ENCODE measurements at regions of chr1 and their contacts with region 1.

Region 1: DNA sequence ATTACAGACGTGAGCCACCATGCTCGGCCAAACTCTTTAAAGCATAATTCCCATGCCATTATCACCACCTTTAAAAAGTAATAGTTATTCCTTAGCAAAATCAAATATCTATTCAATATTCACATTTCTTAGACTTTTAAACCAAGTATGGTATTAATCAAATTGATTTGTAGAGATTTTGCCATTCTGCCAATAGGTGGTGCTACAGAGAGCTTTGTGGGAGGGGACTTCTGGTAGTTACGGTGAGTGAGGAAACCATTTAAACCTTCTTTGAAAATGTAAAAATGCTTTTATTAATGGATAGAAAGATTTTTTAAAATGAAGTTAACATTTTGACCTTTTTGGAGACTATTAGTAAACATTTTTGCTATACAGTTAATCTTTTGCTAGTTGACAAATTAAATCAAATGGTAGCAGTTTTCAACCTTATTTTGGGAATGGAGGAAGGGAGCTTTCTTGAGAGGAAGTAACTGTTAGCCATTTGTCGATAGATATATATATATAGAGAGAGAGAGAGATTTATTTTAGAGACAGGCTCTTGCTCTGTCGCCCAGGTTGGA is 19.3 kb downstream of the IARS2 start:
- DNase-seq: peak; percentile 40
- H3K4me3 ChIP-seq: no peak overlapping the region
- H3K27ac ChIP-seq: no peak overlapping the region
- H3K4me1 ChIP-seq: no peaks in the 10 kb centered on the region
- H3K27me3 ChIP-seq: no peaks in the 10 kb centered on the region
- CTCF ChIP-seq: peak; percentile 50 to 56
- POLR2A ChIP-seq: no peak

Region 2: DNA sequence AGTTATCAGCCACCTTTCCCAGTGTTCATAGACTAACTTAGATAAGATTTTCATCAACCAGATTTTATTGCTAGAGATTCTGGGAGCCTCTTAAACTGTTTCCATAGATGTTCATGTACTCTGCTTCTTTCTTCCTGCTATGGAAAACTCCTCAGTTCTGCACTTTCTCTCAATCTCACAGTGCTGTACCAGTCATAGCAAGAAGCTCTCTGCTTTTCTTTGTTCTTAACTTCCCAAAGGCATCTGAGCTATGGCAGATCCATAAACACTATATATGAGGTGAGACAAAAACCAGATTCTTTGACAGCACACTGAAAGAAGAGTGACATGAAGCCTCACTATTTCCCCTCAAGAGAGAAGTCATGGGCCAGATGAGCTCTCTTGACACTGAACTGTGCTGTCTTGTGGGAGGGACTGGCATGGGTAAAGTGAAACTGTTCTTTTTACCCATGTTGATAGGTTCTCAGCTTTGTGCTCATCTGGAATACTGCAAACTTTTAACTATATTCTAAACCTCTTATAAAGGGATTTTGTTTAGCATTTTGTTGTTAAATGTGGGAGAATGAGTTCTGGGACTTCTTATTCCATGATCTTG is 1003.7 kb before region 1 on chr1:
- CTCF ChIA-PET with region 1: no interaction called
- POLR2A ChIA-PET with region 1: no interaction called
- dilution Hi-C with region 1: no loop called
- intact Hi-C with region 1: no loop called
- DNase-seq: no peak
- H3K4me3 ChIP-seq: no peak overlapping the region
- H3K27ac ChIP-seq: no peak overlapping the region
- H3K4me1 ChIP-seq: no peaks in the 10 kb centered on the region
- H3K27me3 ChIP-seq: peaks cover 0 to 2% of the 10 kb centered on the region in 2 experiments
- CTCF ChIP-seq: no peak
- POLR2A ChIP-seq: no peak

Region 3: GRCh38 chr1:220089650-220090556 is 23.3 kb before region 1 on chr1 and contains the start of gene BPNT1:
- CTCF ChIA-PET with region 1: interaction called, 10 read pairs
- POLR2A ChIA-PET with region 1: no interaction called
- dilution Hi-C with region 1: no loop called
- intact Hi-C with region 1: no loop called
- DNase-seq: peak; percentile 97
- H3K4me3 ChIP-seq: peak within 1 kb of the TSS; percentile 44 to 82 (median 46)
- H3K27ac ChIP-seq: peak within 1 kb of the TSS; percentile 0
- H3K4me1 ChIP-seq: peaks cover 3% of the 10 kb centered on the region
- H3K27me3 ChIP-seq: no peaks in the 10 kb centered on the region
- CTCF ChIP-seq: no peak
- POLR2A ChIP-seq: peak; percentile 96
- total RNA-seq, gene BPNT1: 17.4 and 20.3 TPM in 2 replicates

Region 4: GRCh38 chr1:220099826-220100225 is 13.4 kb before region 1 on chr1:
- CTCF ChIA-PET with region 1: interaction called, 22 read pairs
- POLR2A ChIA-PET with region 1: no interaction called
- dilution Hi-C with region 1: no loop called
- intact Hi-C with region 1: no loop called
- DNase-seq: peak; percentile 23
- H3K4me3 ChIP-seq: no peak overlapping the region
- H3K27ac ChIP-seq: no peak overlapping the region
- H3K4me1 ChIP-seq: peaks cover 3% of the 10 kb centered on the region
- H3K27me3 ChIP-seq: no peaks in the 10 kb centered on the region
- CTCF ChIP-seq: no peak
- POLR2A ChIP-seq: no peak

Region 5: GRCh38 chr1:220123889-220124288 is 10.7 kb after region 1 on chr1:
- CTCF ChIA-PET with region 1: interaction called, 28 read pairs
- POLR2A ChIA-PET with region 1: no interaction called
- dilution Hi-C with region 1: no loop called
- intact Hi-C with region 1: no loop called
- DNase-seq: no peak
- H3K4me3 ChIP-seq: no peak overlapping the region
- H3K27ac ChIP-seq: no peak overlapping the region
- H3K4me1 ChIP-seq: no peaks in the 10 kb centered on the region
- H3K27me3 ChIP-seq: no peaks in the 10 kb centered on the region
- CTCF ChIP-seq: peak; percentile 28 to 31
- POLR2A ChIP-seq: no peak

Region 6: DNA sequence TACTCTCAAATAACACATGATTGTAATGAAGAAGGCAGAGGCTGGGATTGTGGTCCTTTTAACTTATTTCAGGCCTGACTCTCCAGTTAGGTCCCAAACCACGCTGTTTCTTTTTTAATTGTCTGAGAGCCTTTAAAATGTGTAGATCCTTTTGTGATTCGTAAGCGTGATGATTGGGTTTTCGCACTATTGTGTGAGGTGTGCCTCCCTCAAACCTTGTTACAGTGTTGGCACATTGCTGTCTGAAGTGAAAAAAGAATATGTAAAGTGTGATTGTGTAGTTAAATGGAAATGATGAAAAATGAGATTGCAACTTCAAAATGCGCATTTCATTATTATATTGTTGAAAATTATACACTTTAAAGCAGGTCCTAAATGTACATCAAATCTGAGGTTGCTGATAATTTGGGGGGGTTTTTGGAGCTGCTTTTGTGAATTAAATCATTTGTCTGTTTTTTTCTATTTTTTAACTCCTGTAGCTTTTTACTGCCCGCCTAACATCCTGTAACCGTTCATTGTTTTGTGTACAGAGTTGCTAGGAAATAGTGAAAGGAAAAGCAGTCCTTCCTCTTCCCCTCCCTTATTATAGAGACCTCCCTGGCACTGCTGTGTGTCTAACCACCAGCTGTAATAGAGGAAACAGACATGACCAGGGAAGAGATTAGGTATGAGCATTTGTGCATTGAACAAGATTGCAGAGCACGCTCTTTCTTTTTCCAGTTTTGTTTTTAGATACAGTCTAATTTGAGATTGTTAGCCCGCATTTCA is 24.0 kb after region 1 on chr1:
- CTCF ChIA-PET with region 1: interaction called, 23 read pairs
- POLR2A ChIA-PET with region 1: no interaction called
- dilution Hi-C with region 1: no loop called
- intact Hi-C with region 1: no loop called
- DNase-seq: peak; percentile 94
- H3K4me3 ChIP-seq: peak overlapping the region in 1 of 3 experiments; percentile 16
- H3K27ac ChIP-seq: peak overlapping the region; percentile 89
- H3K4me1 ChIP-seq: peaks cover 7% of the 10 kb centered on the region
- H3K27me3 ChIP-seq: no peaks in the 10 kb centered on the region
- CTCF ChIP-seq: no peak
- POLR2A ChIP-seq: no peak

Measured in endothelial cell of umbilical vein (primary cell).